GM12878 (cell line): ENCODE measurements at regions of chr11 and their contacts with region 1.

Region 1: DNA sequence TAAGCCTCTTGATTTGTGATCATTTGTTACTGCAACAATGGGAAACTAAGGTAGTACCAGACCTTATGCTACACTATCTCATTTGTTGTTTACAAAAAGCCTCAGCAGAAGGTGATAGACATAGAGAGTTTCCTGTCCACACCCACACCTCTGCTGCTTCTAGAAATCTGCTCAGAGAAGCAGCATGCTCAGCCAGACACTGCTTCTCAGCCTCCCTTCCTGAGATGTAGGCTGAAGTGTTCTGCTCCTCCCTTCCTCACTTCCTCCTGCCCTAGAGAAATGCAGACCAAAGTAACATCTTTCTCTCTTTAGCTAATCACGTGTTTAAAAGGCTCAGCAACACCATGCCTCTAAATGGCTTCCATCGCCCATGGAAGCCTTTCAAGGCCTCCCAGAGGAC is 88.4 kb downstream of the SLC1A2 start:
- DNase-seq: no peak
- ATAC-seq: peak; percentile 47
- H3K4me3 ChIP-seq: no peak overlapping the region
- H3K27ac ChIP-seq: no peak overlapping the region
- H3K4me1 ChIP-seq: peaks cover 26% of the 10 kb centered on the region
- H3K27me3 ChIP-seq: no peaks in the 10 kb centered on the region
- CTCF ChIP-seq: no peak
- EP300 ChIP-seq: no peak
- POLR2A ChIP-seq: 0 out of 2 replicates have a peak, but pooled peaks have one; percentile 22
- RAD21 ChIP-seq: no peak

Region 2: DNA sequence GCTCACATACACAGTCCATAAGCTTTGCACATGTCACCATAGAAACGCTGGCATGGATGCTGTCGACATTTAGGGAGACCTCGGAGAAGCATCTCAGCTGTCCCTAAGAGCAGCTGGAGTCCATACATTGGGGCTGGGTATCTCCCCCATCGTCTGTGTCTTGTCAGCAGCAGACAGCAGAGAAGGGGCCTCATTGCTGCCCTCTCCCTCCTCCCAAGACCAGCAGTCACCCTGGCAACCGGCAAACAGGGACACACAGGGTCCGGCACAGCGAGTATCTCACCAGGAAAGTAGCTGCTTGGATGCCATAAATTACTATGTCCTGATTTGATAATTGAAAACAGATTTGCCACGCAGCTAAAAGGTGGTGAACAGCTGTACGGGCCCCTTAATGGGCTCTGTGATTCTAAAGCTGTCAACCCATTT is 107.5 kb before region 1 on chr11:
- CTCF ChIA-PET with region 1: no interaction called
- POLR2A ChIA-PET with region 1: no interaction called
- RAD21 ChIA-PET with region 1: no interaction called
- SMC1A ChIA-PET with region 1: no interaction called
- in situ Hi-C with region 1: no loop called
- intact Hi-C with region 1: no loop called
- DNase-seq: no peak
- ATAC-seq: no peak
- H3K4me3 ChIP-seq: no peak overlapping the region
- H3K27ac ChIP-seq: no peak overlapping the region
- H3K4me1 ChIP-seq: no peaks in the 10 kb centered on the region
- H3K27me3 ChIP-seq: no peaks in the 10 kb centered on the region
- CTCF ChIP-seq: no peak
- EP300 ChIP-seq: no peak
- POLR2A ChIP-seq: 0 out of 2 replicates have a peak, but pooled peaks have one; percentile 22
- RAD21 ChIP-seq: no peak

Region 3: GRCh38 chr11:35313066-35313759 is 17.7 kb before region 1 on chr11:
- CTCF ChIA-PET with region 1: interaction called, 8 read pairs
- POLR2A ChIA-PET with region 1: interaction called, 7 read pairs
- RAD21 ChIA-PET with region 1: interaction called, 36 read pairs
- SMC1A ChIA-PET with region 1: interaction called, 24 read pairs
- in situ Hi-C with region 1: no loop called
- intact Hi-C with region 1: no loop called
- DNase-seq: peak; percentile 71
- ATAC-seq: peak; percentile 95
- H3K4me3 ChIP-seq: 0 out of 2 replicates have a peak overlapping the region, but pooled peaks have one; percentile 24
- H3K27ac ChIP-seq: peak overlapping the region; percentile 76
- H3K4me1 ChIP-seq: peaks cover 30% of the 10 kb centered on the region
- H3K27me3 ChIP-seq: no peaks in the 10 kb centered on the region
- CTCF ChIP-seq: no peak
- EP300 ChIP-seq: peak; percentile 85; a peak in 3 of 4 replicates
- POLR2A ChIP-seq: no peak
- RAD21 ChIP-seq: 0 out of 2 replicates have a peak, but pooled peaks have one; percentile 2

Region 4: GRCh38 chr11:35318977-35319925 is 11.7 kb before region 1 on chr11:
- CTCF ChIA-PET with region 1: interaction called, 8 read pairs
- POLR2A ChIA-PET with region 1: interaction called, 4 read pairs
- RAD21 ChIA-PET with region 1: interaction called, 36 read pairs
- SMC1A ChIA-PET with region 1: interaction called, 24 read pairs
- in situ Hi-C with region 1: no loop called
- intact Hi-C with region 1: no loop called
- DNase-seq: no peak
- ATAC-seq: peak; percentile 71
- H3K4me3 ChIP-seq: no peak overlapping the region
- H3K27ac ChIP-seq: no peak overlapping the region; the same call in 1 of the 2 replicates
- H3K4me1 ChIP-seq: peaks cover 28% of the 10 kb centered on the region
- H3K27me3 ChIP-seq: no peaks in the 10 kb centered on the region
- CTCF ChIP-seq: no peak
- EP300 ChIP-seq: no peak
- POLR2A ChIP-seq: no peak
- RAD21 ChIP-seq: no peak